Left ventricle myocardium superior (tissue), 1 donor: ENCODE measurements at regions of chr7 and their contacts with region 1.

Region 1: GRCh38 chr7:135281363-135281949 is 47.8 kb downstream of the STRA8 start:
- DNase-seq: peak; percentile 70
- ATAC-seq: peak; percentile 97

Region 2: DNA sequence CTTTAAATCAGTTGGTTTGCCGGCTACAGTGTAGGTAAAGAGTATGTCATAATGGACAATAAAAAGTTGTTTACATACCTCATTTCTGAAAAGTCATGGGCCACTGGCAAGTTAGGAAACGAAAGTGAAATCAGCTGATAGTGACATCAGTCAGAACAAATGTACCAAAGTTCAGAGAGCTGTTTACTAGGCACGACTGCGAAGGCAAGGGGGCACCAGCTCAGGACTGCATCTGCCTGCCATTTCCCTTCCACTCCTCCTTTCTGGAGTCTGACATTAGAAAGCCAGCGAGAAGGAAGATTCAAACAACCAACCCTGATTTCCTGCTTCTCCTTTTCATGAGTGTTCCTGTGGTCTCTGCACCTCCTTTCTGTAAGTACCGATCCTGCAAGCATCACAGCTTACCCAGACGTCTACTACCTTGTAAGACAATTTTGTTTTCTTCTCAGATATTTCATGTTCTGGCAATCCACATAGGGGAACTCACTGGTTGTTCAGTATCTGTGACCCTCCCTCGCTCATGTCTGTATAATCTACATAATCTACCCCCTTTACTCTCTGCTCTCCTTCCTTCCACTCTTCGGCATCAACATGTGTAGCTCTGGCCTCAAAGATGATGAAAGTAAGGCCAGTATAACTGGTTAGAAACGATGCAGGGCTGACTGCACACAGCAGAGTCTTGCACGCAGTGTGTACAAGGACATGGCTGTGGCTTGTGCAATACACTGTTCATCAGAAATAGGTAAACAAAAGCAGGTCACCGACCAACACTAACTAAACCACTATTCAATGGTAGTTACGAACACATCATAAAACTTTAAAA is 133.3 kb before region 1 on chr7 and contains the start of gene TMEM140:
- intact Hi-C with region 1: no loop called
- DNase-seq: peak; percentile 42
- ATAC-seq: peak; percentile 85
- total RNA-seq, gene TMEM140: 16.5 TPM

Region 3: GRCh38 chr7:135335628-135336139 is 54.2 kb after region 1 on chr7:
- intact Hi-C with region 1: loop called (anchors 10 kb)
- DNase-seq: peak; percentile 36
- ATAC-seq: peak; percentile 77

Region 4: GRCh38 chr7:135558337-135558767 is 276.9 kb after region 1 on chr7:
- intact Hi-C with region 1: loop called (anchors 2 kb)
- DNase-seq: peak; percentile 48
- ATAC-seq: peak; percentile 78

Region 5: GRCh38 chr7:135644154-135644553 is 362.7 kb after region 1 on chr7:
- intact Hi-C with region 1: loop called (anchors 5 kb)
- DNase-seq: no peak
- ATAC-seq: no peak